Mammary epithelial cell (primary cell): ENCODE measurements at regions of chr9 and their contacts with region 1.

Region 1: GRCh38 chr9:97768736-97769135 is 71.6 kb upstream of the XPA start:
- DNase-seq: peak; percentile 31
- H3K4me3 ChIP-seq: no peak overlapping the region
- H3K27ac ChIP-seq: peak overlapping the region; percentile 10
- H3K4me1 ChIP-seq: peaks cover 24% of the 10 kb centered on the region
- H3K27me3 ChIP-seq: no peaks in the 10 kb centered on the region
- CTCF ChIP-seq: no peak

Region 2: GRCh38 chr9:97510797-97511761 is 257.7 kb before region 1 on chr9:
- CTCF ChIA-PET with region 1: no interaction called
- dilution Hi-C with region 1: no loop called
- in situ Hi-C with region 1: no loop called
- intact Hi-C with region 1: no loop called
- DNase-seq: peak; percentile 66
- H3K4me3 ChIP-seq: no peak overlapping the region
- H3K27ac ChIP-seq: no peak overlapping the region
- H3K4me1 ChIP-seq: no peaks in the 10 kb centered on the region
- H3K27me3 ChIP-seq: no peaks in the 10 kb centered on the region
- CTCF ChIP-seq: no peak

Region 3: GRCh38 chr9:97689401-97689800 is 79.3 kb before region 1 on chr9:
- CTCF ChIA-PET with region 1: no interaction called
- dilution Hi-C with region 1: loop called (anchors 5 kb)
- in situ Hi-C with region 1: no loop called
- intact Hi-C with region 1: no loop called
- DNase-seq: no peak
- H3K4me3 ChIP-seq: no peak overlapping the region
- H3K27ac ChIP-seq: no peak overlapping the region
- H3K4me1 ChIP-seq: no peaks in the 10 kb centered on the region
- H3K27me3 ChIP-seq: no peaks in the 10 kb centered on the region
- CTCF ChIP-seq: no peak